ENCODE measurements at regions of chr1 and their contacts with region 1.

Region 1: GRCh38 chr1:202810615-202811295 is at the start of gene PCAT6:
- DNase-seq: peak; percentile 97
- H3K4me3 Mint-ChIP-seq: peak within 1 kb of the TSS; percentile 85
- H3K27ac Mint-ChIP-seq: peak within 1 kb of the TSS; percentile 79
- H3K4me1 Mint-ChIP-seq: peaks cover 31% of the 10 kb centered on the region
- H3K27me3 Mint-ChIP-seq: peaks cover 22% of the 10 kb centered on the region
- total RNA-seq, gene PCAT6: 0.83 and 1.4 TPM in 2 replicates

Region 2: DNA sequence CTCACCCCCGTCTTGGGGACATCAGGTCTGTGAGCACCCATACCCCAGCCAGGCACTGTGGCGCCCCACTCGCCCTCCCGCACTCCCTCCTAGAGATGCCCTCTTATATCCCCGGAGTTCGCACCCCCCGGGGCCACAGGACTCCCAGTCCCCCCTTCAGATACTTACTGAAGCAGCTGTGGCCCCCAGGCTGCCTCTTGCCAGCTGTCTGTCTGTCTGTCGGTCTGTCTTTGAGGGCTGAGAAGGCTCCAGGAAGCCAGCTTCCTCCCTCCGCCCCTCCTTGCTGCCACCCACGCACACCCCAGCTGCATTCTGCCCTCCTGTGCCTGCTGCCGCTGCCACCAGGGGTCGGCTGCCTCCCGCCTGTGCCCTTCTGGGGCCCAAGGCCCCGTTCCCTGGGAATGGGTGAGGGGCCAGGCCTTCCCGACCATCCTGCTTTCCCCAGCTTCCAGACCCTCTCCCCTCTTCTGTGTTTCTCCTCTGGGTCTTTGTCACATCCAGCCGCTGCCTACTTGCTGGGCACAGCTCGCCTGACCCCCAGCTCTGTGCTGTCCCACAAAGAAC is 650.3 kb before region 1 on chr1 and contains the start of gene PTPN7:
- intact Hi-C with region 1: loop called (anchors 10 kb)
- DNase-seq: peak; percentile 89
- H3K4me3 Mint-ChIP-seq: peak within 1 kb of the TSS; percentile 99
- H3K27ac Mint-ChIP-seq: peak within 1 kb of the TSS; percentile 97
- H3K4me1 Mint-ChIP-seq: peaks cover 71% of the 10 kb centered on the region
- H3K27me3 Mint-ChIP-seq: no peaks in the 10 kb centered on the region
- total RNA-seq, gene PTPN7: 475 and 478 TPM in 2 replicates

Region 3: DNA sequence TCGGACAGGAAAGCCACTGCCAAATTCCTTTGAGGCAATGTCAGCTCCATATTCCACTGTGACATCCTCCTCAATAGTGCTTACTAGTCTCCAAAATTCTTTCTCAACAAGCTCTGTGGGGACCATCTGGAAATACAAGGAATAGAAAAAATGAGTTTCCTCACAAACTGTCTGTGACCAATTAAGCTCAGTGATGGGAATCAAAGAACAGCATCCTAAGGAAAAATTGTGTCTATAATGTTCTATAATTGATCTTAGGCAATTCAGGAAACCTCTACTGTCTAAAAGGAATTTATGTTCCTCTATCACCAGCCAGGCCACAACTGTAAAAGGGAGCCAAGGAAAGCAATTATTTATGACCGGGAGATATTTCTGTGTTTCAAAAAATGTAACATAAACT is 54.4 kb before region 1 on chr1:
- intact Hi-C with region 1: loop called (anchors 5 kb)
- DNase-seq: no peak
- H3K4me3 Mint-ChIP-seq: no peak overlapping the region
- H3K27ac Mint-ChIP-seq: no peak overlapping the region
- H3K4me1 Mint-ChIP-seq: no peaks in the 10 kb centered on the region
- H3K27me3 Mint-ChIP-seq: no peaks in the 10 kb centered on the region

Region 4: DNA sequence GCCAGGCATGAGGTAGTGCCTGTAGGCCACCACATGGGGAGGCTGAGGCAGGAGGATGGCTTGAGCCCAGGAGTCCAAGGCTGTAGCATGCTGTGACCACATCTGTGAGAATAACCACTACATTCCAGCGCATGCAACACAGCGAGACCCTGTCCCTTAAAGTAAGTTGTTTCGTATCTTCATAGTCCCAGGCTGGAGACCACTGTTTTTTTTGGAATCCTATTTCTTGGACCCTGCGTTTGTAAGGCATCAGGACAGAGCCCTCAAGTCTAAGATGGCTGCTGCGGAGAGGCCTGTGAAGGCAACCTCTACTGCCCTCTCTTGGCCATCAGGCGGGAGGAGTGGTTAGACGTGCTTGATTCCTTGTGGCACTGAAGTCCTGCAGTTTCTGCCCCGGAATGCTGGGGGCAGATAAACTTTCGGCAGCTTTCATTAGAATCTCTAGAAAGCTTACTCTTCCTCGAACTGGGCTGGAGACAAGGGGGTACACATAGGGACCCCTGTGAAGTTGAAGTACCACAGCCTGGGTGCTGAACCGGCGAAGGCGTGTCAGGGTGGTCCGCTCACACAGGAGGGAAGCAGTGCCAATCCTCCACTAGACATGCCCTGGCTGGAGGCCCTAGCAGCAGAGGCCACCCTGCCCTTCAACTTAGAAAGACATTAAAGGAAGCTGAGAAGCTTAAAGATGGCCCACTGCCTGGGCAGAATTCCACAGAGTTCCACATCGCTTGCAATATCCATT is 41.6 kb after region 1 on chr1:
- intact Hi-C with region 1: loop called (anchors 1 kb)
- DNase-seq: peak; percentile 85
- H3K4me3 Mint-ChIP-seq: no peak overlapping the region
- H3K27ac Mint-ChIP-seq: no peak overlapping the region
- H3K4me1 Mint-ChIP-seq: peaks cover 20% of the 10 kb centered on the region
- H3K27me3 Mint-ChIP-seq: no peaks in the 10 kb centered on the region

Region 5: DNA sequence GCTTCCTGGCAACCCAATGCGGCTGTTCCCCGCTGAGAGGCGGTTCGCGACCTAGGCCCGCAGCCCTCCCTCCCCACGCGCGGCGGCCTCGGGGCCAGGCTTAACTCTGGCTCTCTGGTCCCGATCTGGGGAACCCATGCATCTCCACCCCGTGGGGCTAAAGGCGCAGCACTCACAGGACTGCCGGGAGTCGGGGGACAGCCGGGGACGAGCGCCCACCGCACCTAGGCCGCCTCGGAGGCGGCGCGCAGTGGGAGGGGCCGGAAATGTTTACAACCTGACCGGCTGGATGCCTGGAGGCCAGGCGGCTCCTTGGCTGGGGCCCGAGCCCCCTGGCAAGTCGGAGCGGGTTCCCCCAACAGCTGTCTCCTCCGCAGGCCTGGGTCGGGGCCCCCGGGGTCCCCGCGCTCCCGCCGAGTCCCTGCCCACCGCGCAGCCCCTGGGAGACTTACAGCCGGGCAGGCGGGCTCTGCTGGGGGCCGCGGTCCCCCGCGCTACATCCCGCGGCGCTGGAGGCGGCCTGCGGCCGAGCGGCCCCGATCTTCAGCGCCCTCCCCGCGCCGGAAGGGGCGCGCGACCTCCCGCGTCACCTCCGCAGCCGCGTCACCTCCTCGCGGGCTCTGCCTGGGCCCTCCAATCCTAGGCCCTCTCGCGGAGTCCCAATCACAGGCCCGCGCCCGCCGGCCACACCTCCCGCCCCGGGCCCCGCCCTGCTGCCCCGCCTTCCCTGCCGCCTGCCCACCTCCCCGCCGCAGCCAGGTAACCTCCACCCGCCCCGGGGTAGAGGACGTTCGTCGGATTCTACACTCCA is 147.2 kb after region 1 on chr1 and contains the start of gene ADIPOR1:
- intact Hi-C with region 1: loop called (anchors 1 kb)
- DNase-seq: peak; percentile 98
- H3K4me3 Mint-ChIP-seq: peak within 1 kb of the TSS; percentile 89
- H3K27ac Mint-ChIP-seq: peak within 1 kb of the TSS; percentile 82
- H3K4me1 Mint-ChIP-seq: peaks cover 31% of the 10 kb centered on the region
- H3K27me3 Mint-ChIP-seq: no peaks in the 10 kb centered on the region
- total RNA-seq, gene ADIPOR1: 86.7 and 92.1 TPM in 2 replicates

Region 6: GRCh38 chr1:203026031-203026989 is 215.6 kb after region 1 on chr1 and contains the start of gene PPFIA4:
- intact Hi-C with region 1: loop called (anchors 1 kb)
- DNase-seq: peak; percentile 97
- H3K4me3 Mint-ChIP-seq: peak within 1 kb of the TSS; percentile 92
- H3K27ac Mint-ChIP-seq: peak within 1 kb of the TSS; percentile 80
- H3K4me1 Mint-ChIP-seq: peaks cover 26% of the 10 kb centered on the region
- H3K27me3 Mint-ChIP-seq: peaks cover 2% of the 10 kb centered on the region
- total RNA-seq, gene PPFIA4: 34.2 and 35.1 TPM in 2 replicates